Left cardiac atrium (tissue), 4 donors: ENCODE measurements at regions of chr2 and their contacts with region 1.

Region 1: DNA sequence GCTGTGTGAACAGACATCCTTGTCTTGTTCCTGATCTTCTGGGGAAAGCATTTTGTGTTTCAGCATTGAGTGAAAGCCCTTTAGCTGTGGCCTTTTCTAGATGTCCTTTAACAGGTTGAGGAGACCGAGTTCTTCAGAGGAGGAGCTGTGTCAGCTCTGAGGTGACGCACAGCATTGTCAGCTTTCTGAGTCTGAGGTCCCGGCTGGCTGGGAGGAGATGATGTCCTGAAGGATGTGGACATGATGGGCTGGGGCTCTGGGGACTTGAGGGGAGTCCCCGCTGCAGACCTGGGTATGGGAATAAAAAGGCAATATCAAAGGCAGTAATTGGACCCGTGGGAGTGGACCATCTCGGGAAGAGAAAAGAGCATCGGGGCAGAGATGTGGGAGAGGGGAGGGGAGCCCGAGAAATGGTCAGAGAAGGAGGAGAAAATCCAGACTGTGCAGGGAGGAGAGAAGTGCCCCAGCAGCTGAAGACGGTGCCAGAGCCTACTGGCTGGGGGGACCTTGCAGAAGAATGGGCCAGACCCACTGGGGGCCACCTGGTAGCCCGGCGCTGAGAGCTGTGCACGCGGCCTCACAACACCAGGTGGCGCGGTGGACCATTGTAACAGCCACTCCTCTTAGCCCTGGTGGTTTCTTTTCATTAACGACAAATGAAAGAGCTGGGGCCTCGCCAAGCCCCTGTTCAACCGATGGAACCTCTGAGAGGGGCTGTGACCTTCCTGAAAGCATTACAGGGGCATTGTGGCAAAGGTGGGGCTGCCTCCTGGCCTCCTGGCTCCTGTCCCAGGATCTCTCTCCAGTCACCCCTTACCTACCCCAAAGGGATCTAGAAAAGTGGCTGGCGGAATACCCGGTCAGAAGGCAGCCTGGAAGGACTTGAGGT is 61.6 kb downstream of the ST3GAL5 start:
- DNase-seq: peak; percentile 82
- ATAC-seq: peak; percentile 92 to 94

Region 2: DNA sequence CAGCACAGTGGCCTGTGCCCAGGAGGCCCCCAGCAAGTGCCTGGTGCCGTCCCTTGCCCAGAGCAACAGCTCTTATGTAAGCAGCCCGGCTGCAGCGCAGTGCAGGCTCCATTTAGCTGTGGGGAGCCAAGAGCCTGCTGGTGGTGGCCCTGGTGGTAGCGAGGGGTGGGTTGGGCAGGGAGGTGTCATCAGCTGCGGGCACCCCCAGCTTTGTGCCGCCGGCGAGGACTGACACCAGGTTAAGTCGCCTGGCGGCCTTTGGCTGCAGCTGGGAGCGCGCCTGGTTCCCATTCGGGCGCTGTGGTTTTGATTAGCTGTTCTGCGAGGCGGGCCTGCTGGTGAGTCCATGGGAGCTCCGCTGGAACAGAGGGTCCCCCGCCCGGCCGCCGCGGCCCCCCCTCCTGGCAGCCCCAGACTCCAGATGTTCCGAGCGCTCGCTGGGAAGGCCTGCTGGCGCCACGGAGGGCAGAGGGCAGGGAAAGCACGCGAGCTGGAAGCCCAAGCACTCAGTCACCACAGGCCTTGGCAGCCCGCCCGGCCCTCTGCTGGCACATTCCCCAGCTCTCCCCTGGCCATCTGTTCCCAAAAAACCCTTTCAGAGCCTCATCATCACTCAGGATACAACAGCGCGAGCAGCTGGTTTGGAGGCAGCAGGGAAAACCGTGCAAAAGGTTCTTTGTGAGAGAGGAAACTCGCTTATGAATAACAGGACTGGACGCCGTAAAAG is 55.1 kb before region 1 on chr2:
- intact Hi-C with region 1: no loop called
- DNase-seq: peak; percentile 98
- ATAC-seq: peak; percentile 90 to 92

Region 3: GRCh38 chr2:86079981-86080911 is 253.0 kb after region 1 on chr2:
- intact Hi-C with region 1: loop called (anchors 1 to 2 kb)
- DNase-seq: peak; percentile 84
- ATAC-seq: peak; percentile 88 to 89

Region 4: GRCh38 chr2:86492048-86492453 is 664.8 kb after region 1 on chr2:
- intact Hi-C with region 1: no loop called
- DNase-seq: no peak
- ATAC-seq: peak; percentile 27 to 47